ENCODE measurements at regions of chr7 and their contacts with region 1.

Region 1: GRCh38 chr7:20598459-20599309 is 16.8 kb upstream of the ABCB5 start:
- DNase-seq: peak; percentile 48
- ATAC-seq: peak; percentile 83
- H3K4me3 ChIP-seq: no peak overlapping the region
- H3K27ac ChIP-seq: no peak overlapping the region
- H3K4me1 ChIP-seq: no peaks in the 10 kb centered on the region
- H3K27me3 ChIP-seq: no peaks in the 10 kb centered on the region
- CTCF ChIP-seq: peak; percentile 61 to 83 (median 82)
- POLR2A ChIP-seq: no peak
- RAD21 ChIP-seq: peak; percentile 93

Region 2: DNA sequence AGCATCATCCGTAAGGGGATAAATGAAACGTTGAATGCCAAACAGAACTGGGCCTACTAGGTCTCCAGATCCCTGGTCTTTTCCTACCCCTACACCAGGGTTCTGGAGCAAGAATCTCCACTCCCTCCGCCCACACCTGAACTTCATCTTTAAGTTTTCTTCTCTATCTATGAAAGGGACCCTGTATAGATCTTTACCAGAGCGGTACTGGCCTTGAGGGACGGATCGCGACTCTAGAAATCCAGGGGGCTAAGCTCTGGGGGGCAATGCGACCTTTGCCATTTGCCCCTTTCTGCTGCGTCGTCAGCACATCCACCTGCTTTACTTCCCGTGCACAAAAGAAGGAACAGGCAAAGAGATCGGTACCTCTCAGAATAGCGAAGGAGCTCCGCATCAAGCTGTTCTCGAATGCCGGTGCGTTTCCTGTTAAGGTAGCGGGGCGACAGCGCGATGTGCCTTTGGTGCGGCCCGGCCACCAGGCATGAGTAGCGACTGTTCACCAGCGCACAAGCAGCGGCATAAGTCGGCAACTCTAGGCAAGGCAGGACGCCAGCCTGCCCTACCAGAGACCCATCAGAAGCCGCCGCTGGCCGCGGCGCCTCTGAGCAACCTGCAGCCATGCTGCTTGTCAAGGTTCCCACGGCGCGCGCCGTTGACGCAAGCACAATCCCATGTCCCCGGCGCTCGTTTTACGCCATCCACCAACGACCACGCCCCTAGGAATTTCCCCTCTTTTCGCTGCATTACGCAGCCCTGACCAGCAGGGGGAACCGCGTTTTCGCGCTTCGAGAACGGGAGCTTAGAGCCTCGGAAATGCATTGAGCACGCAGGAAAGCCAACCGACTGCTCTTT is 890.1 kb before region 1 on chr7 and contains the start of gene POLR1F:
- CTCF ChIA-PET with region 1: interaction called, 95 read pairs
- POLR2A ChIA-PET with region 1: interaction called, 6 read pairs
- RAD21 ChIA-PET with region 1: interaction called, 12 to 23 read pairs
- intact Hi-C with region 1: loop called (anchors 1 kb)
- DNase-seq: peak; percentile 91
- ATAC-seq: peak; percentile 93
- H3K4me3 ChIP-seq: peak within 1 kb of the TSS; percentile 62 to 95
- H3K27ac ChIP-seq: peak within 1 kb of the TSS; percentile 21; the same call in 1 of the 2 replicates
- H3K4me1 ChIP-seq: peaks cover 0 to 17% of the 10 kb centered on the region in 2 experiments; a peak in 2 of 4 replicates
- H3K27me3 ChIP-seq: no peaks in the 10 kb centered on the region
- CTCF ChIP-seq: peak; percentile 78 to 85 (median 84)
- POLR2A ChIP-seq: peak; percentile 72
- RAD21 ChIP-seq: peak; percentile 70
- total RNA-seq, gene POLR1F: 21.1 TPM

Region 3: GRCh38 chr7:19747740-19748339 is 850.8 kb before region 1 on chr7:
- CTCF ChIA-PET with region 1: interaction called, 33 read pairs
- POLR2A ChIA-PET with region 1: no interaction called
- RAD21 ChIA-PET with region 1: interaction called, 3 to 7 read pairs
- intact Hi-C with region 1: loop called (anchors 1 kb)
- DNase-seq: peak; percentile 49
- ATAC-seq: peak; percentile 87
- H3K4me3 ChIP-seq: no peak overlapping the region
- H3K27ac ChIP-seq: no peak overlapping the region
- H3K4me1 ChIP-seq: no peaks in the 10 kb centered on the region
- H3K27me3 ChIP-seq: no peaks in the 10 kb centered on the region
- CTCF ChIP-seq: peak; percentile 49 to 70 (median 64); a peak in 5 of 6 replicates
- POLR2A ChIP-seq: no peak
- RAD21 ChIP-seq: peak; percentile 76

Region 4: DNA sequence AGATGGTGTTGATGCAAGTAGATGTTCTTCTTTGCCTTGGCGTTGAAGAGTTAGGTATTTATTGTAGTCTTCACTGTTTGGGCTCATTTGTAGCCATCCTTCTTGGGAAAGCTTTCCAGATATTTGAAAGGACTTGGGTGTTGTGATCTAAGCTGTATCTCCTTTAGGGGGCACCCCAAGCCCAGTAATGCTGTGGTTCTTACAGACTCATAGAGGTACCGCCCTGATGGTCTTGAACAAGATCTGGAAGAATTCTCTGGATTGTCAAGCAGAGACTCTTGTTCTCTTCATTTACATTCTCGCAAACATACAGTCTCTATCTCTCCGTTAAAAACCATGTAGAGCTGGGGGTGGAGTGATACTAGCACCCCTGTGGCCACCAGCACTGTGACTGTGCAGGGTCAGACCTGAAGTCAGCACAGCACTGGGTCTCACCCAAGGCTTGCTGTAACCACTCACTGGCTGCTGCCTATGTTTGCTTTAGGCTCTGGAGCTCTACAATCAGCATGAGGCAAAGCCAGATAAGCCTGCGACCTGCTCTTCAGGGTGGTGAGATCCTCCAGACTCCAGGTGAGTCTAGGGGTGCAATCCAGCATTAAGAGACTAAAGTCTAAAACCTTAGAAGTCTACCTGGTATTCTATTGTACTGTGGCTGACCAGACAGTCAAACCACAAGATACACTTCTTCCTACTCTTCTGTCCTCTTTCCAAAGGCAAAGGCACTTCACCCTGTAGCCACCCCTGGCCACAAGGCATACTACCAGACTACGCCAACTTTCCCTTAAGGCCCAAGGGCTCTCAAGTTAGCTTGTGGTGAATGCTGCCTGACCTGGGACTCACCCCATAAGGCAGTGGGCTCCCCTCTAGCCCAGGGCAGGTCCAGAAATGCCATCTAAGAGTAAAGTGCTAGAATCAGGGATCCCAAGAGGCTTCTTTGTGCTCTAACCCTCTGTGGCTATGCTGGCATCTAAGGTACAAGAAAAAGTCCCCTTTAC is 615.5 kb before region 1 on chr7:
- CTCF ChIA-PET with region 1: interaction called, 23 read pairs
- POLR2A ChIA-PET with region 1: no interaction called
- RAD21 ChIA-PET with region 1: interaction called, 4 to 5 read pairs
- intact Hi-C with region 1: loop called (anchors 2 kb)
- DNase-seq: peak; percentile 35
- ATAC-seq: peak; percentile 71
- H3K4me3 ChIP-seq: no peak overlapping the region
- H3K27ac ChIP-seq: no peak overlapping the region
- H3K4me1 ChIP-seq: peaks cover 0 to 7% of the 10 kb centered on the region in 2 experiments; a peak in 1 of 4 replicates
- H3K27me3 ChIP-seq: no peaks in the 10 kb centered on the region
- CTCF ChIP-seq: peak; percentile 35 to 45 (median 41); a peak in 3 of 6 replicates
- POLR2A ChIP-seq: no peak
- RAD21 ChIP-seq: peak; percentile 75

Region 5: GRCh38 chr7:20330240-20330927 is 268.3 kb before region 1 on chr7 and contains the start of gene ITGB8:
- CTCF ChIA-PET with region 1: interaction called, 8 read pairs
- POLR2A ChIA-PET with region 1: no interaction called
- RAD21 ChIA-PET with region 1: interaction called in 1 of 2 experiments, 4 read pairs
- intact Hi-C with region 1: loop called (anchors 5 kb)
- DNase-seq: no peak
- ATAC-seq: peak; percentile 73
- H3K4me3 ChIP-seq: peak within 1 kb of the TSS; percentile 66 to 81
- H3K27ac ChIP-seq: peak within 1 kb of the TSS; percentile 86
- H3K4me1 ChIP-seq: peaks cover 3 to 18% of the 10 kb centered on the region in 2 experiments; a peak in 3 of 4 replicates
- H3K27me3 ChIP-seq: no peaks in the 10 kb centered on the region
- CTCF ChIP-seq: peak in 1 of 3 experiments; percentile 11; a peak in 1 of 6 replicates
- POLR2A ChIP-seq: peak; percentile 18
- RAD21 ChIP-seq: no peak
- total RNA-seq, gene ITGB8: 2.4 TPM